ENCODE measurements at regions of chr6 and their contacts with region 1.

Region 1: GRCh38 chr6:97394160-97394748 is 111.2 kb upstream of the MMS22L start:
- DNase-seq: peak in 6 of 9 experiments; percentile 4 to 70 (median 44)
- ATAC-seq: peak; percentile 80
- H3K4me3 ChIP-seq: no peak overlapping the region
- H3K4me3 Mint-ChIP-seq: no peak overlapping the region
- H3K27ac ChIP-seq: no peak overlapping the region
- H3K27ac Mint-ChIP-seq: no peak overlapping the region
- H3K4me1 ChIP-seq: no peaks in the 10 kb centered on the region
- H3K4me1 Mint-ChIP-seq: no peaks in the 10 kb centered on the region
- H3K27me3 ChIP-seq: no peaks in the 10 kb centered on the region
- H3K27me3 Mint-ChIP-seq: peaks cover 15% of the 10 kb centered on the region
- CTCF ChIP-seq: peak; percentile 96

Region 2: GRCh38 chr6:96554559-96554958 is 839.7 kb before region 1 on chr6:
- CTCF ChIA-PET with region 1: no interaction called
- POLR2A ChIA-PET with region 1: no interaction called
- intact Hi-C with region 1: loop called in 1 of 2 experiments (anchors 10 kb)
- DNase-seq: no peak
- ATAC-seq: no peak
- H3K4me3 ChIP-seq: no peak overlapping the region
- H3K4me3 Mint-ChIP-seq: no peak overlapping the region
- H3K27ac ChIP-seq: no peak overlapping the region
- H3K27ac Mint-ChIP-seq: no peak overlapping the region
- H3K4me1 ChIP-seq: no peaks in the 10 kb centered on the region
- H3K4me1 Mint-ChIP-seq: no peaks in the 10 kb centered on the region
- H3K27me3 ChIP-seq: no peaks in the 10 kb centered on the region
- H3K27me3 Mint-ChIP-seq: no peaks in the 10 kb centered on the region
- CTCF ChIP-seq: no peak

Region 3: DNA sequence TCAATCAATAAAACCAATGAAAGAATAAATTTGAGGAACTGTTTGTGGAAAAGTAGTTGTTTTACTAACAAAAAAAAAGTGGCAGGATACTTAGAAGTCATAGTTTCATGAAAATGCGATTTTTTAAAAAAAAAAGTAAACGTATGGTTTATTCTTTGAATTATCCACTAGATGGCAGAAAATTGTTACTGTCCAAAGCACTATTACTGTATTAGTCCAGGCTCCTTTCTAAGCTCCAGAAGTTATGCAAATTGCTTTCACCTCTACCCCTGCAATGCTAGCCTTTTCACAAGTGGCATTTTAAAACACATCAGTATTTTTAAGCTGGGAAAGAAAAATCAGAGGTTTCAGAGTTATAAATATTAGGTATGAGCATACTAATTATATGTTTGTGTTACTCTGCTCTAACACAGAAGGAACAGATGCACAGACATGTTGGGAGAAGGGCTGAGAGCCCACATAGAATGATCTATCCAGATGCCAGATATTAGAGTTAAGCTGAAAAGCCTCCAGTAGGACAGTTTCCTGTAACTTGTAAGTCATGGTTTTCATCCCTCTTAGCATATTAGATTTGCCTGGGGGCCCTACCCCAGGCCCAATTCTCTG is 767.4 kb before region 1 on chr6:
- CTCF ChIA-PET with region 1: no interaction called
- POLR2A ChIA-PET with region 1: no interaction called
- intact Hi-C with region 1: loop called (anchors 1 to 5 kb)
- DNase-seq: peak in 2 of 9 experiments; percentile 15 to 35
- ATAC-seq: peak; percentile 36
- H3K4me3 ChIP-seq: no peak overlapping the region
- H3K4me3 Mint-ChIP-seq: no peak overlapping the region
- H3K27ac ChIP-seq: no peak overlapping the region
- H3K27ac Mint-ChIP-seq: no peak overlapping the region
- H3K4me1 ChIP-seq: no peaks in the 10 kb centered on the region
- H3K4me1 Mint-ChIP-seq: no peaks in the 10 kb centered on the region
- H3K27me3 ChIP-seq: no peaks in the 10 kb centered on the region
- H3K27me3 Mint-ChIP-seq: peaks cover 9% of the 10 kb centered on the region
- CTCF ChIP-seq: peak; percentile 44

Region 4: GRCh38 chr6:97068211-97068610 is 326.0 kb before region 1 on chr6:
- CTCF ChIA-PET with region 1: no interaction called
- POLR2A ChIA-PET with region 1: no interaction called
- intact Hi-C with region 1: loop called (anchors 1 to 2 kb)
- DNase-seq: peak in 2 of 9 experiments; percentile 15 to 24
- ATAC-seq: no peak
- H3K4me3 ChIP-seq: no peak overlapping the region
- H3K4me3 Mint-ChIP-seq: no peak overlapping the region
- H3K27ac ChIP-seq: no peak overlapping the region
- H3K27ac Mint-ChIP-seq: no peak overlapping the region
- H3K4me1 ChIP-seq: no peaks in the 10 kb centered on the region
- H3K4me1 Mint-ChIP-seq: no peaks in the 10 kb centered on the region
- H3K27me3 ChIP-seq: no peaks in the 10 kb centered on the region
- H3K27me3 Mint-ChIP-seq: no peaks in the 10 kb centered on the region
- CTCF ChIP-seq: peak; percentile 34

Region 5: DNA sequence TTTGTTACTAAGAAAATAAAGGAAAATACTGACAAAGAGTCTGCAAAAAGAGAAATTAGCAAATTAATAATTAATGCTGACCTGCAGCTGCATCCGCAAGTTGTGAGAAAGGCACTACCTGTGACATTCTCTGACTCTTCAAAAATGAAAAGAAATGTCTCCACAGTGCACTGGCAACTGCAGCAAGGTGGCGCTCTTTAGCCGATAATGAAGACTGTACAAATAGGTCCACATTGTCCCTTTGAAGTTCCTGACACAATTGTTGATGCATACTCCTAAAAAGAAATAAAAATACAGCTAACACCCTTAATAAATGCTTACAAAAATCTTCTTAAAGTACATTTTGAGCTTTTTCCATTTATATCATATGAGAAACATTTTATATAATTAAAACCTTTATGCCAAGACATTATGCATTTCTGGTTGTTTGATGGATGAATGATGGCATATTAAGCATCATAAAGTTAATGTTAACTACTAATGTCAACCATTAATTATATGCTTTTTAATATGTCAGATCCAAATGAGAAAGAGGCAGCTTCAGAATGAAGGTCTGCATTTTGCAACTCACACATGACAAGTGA is 207.7 kb before region 1 on chr6:
- CTCF ChIA-PET with region 1: interaction called, 63 read pairs
- POLR2A ChIA-PET with region 1: no interaction called
- intact Hi-C with region 1: loop called (anchors 1 kb)
- DNase-seq: peak; percentile 33 to 72 (median 60)
- ATAC-seq: peak; percentile 65
- H3K4me3 ChIP-seq: no peak overlapping the region
- H3K4me3 Mint-ChIP-seq: no peak overlapping the region
- H3K27ac ChIP-seq: no peak overlapping the region
- H3K27ac Mint-ChIP-seq: no peak overlapping the region
- H3K4me1 ChIP-seq: no peaks in the 10 kb centered on the region
- H3K4me1 Mint-ChIP-seq: no peaks in the 10 kb centered on the region
- H3K27me3 ChIP-seq: no peaks in the 10 kb centered on the region
- H3K27me3 Mint-ChIP-seq: no peaks in the 10 kb centered on the region
- CTCF ChIP-seq: peak; percentile 91

Region 6: DNA sequence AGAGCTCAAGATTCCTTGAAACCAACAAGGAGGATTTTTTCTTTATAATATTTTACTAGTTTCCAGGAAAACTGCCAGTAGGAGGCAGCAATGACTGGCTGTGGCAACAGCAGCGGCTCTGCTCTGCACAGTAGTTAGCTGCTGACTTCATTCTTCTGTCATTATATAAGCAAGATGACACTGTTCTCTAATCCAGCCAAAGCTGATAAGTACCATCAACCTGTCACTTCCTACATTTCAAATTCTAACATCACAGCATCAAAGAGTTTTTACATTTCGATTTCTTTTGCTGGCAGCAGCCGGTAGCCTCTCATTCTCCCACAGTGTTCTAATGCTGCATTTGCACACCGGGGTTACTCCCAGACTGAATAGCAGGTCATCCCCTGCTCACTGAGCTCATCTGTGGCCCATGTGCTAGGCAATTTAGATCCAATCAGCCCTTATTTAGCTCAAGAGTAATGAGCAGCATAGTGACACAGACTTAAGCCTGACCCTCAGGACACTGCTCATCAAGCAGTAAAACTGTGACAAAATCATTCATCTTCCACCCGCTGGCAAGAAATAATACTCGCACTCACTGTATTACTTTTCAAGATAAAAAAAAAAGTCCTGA is 179.0 kb before region 1 on chr6:
- CTCF ChIA-PET with region 1: no interaction called
- POLR2A ChIA-PET with region 1: no interaction called
- intact Hi-C with region 1: loop called in 1 of 2 experiments (anchors 1 kb)
- DNase-seq: peak in 2 of 9 experiments; percentile 10 to 23
- ATAC-seq: no peak
- H3K4me3 ChIP-seq: no peak overlapping the region
- H3K4me3 Mint-ChIP-seq: no peak overlapping the region
- H3K27ac ChIP-seq: no peak overlapping the region
- H3K27ac Mint-ChIP-seq: no peak overlapping the region
- H3K4me1 ChIP-seq: no peaks in the 10 kb centered on the region
- H3K4me1 Mint-ChIP-seq: no peaks in the 10 kb centered on the region
- H3K27me3 ChIP-seq: no peaks in the 10 kb centered on the region
- H3K27me3 Mint-ChIP-seq: no peaks in the 10 kb centered on the region
- CTCF ChIP-seq: no peak

Region 7: GRCh38 chr6:97548354-97548753 is 154.1 kb after region 1 on chr6:
- CTCF ChIA-PET with region 1: no interaction called
- POLR2A ChIA-PET with region 1: no interaction called
- intact Hi-C with region 1: no loop called
- DNase-seq: no peak
- ATAC-seq: no peak
- H3K4me3 ChIP-seq: no peak overlapping the region
- H3K4me3 Mint-ChIP-seq: no peak overlapping the region
- H3K27ac ChIP-seq: no peak overlapping the region
- H3K27ac Mint-ChIP-seq: no peak overlapping the region
- H3K4me1 ChIP-seq: no peaks in the 10 kb centered on the region
- H3K4me1 Mint-ChIP-seq: no peaks in the 10 kb centered on the region
- H3K27me3 ChIP-seq: no peaks in the 10 kb centered on the region
- H3K27me3 Mint-ChIP-seq: no peaks in the 10 kb centered on the region
- CTCF ChIP-seq: no peak

Measured in CD8-positive, alpha-beta T cell (primary cell).